ENCODE measurements at regions of chr7 and their contacts with region 1.

Region 1: GRCh38 chr7:24819916-24820689 is 62.8 kb upstream of the GSDME start:
- DNase-seq: peak; percentile 95

Region 2: DNA sequence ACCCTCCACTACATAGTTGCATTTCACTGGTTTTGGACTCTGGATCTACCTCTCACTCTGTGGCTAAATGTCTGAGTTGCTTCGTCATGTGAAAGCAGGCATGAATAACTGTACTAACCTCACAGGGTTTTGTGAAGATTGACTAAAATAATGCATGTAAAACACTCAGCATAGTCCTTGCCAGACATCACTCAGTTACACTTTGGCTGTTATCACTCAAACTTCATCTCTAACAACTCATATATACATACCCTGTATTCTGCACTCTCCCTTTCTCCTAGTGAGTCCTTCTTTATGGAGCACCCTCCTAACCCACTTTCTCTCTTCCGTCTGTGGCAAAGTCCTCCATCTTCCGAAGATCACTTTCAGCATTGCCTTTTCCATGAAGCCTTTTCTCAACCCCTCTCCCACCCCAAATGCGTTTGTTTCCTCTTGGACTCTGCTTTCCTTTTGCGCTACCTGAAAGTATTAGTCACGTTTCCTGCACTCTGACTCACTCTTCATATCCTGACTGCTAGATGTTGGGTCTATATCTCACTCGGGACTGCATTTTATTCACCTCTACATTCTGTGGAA is 87.3 kb after region 1 on chr7:
- in situ Hi-C with region 1: no loop called
- DNase-seq: peak; percentile 87

Region 3: DNA sequence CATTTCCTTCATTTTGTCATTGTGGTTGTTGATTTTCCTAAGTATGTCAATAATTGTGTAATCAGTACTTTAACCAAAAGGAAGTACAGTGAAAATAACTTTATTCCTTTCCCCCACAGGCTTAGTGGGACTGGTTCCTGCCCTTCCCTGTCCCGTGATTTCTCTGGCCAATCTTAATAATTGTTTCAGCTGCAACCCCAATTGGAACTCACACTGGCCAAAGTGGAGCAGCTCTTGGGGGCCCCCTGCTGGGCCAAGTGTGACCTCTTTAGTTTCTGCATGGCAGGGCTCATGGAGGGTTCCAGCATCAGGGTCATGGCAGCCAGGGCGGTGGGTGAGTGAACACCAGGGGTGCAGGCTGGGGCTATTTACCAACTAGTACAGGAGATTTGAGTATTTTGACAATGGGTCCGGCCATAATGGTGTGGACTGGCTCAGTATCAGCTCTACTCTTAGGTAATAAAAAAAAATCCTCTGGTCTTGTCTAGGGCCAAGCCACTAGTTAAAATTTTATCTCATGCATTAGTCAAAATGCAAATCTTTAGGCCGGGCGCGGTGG is 273.2 kb after region 1 on chr7:
- in situ Hi-C with region 1: loop called (anchors 25 kb)
- DNase-seq: peak; percentile 93

Measured in ACHN (cell line).